Mammary epithelial cell (primary cell): ENCODE measurements at regions of chr10 and their contacts with region 1.

Region 1: GRCh38 chr10:25405871-25406270 is 231.1 kb downstream of the GPR158 start:
- DNase-seq: peak; percentile 17
- H3K4me3 ChIP-seq: no peak overlapping the region
- H3K27ac ChIP-seq: no peak overlapping the region
- H3K4me1 ChIP-seq: no peaks in the 10 kb centered on the region
- H3K27me3 ChIP-seq: no peaks in the 10 kb centered on the region
- CTCF ChIP-seq: no peak

Region 2: GRCh38 chr10:24724381-24725228 is 681.3 kb before region 1 on chr10:
- CTCF ChIA-PET with region 1: no interaction called
- dilution Hi-C with region 1: no loop called
- in situ Hi-C with region 1: no loop called
- intact Hi-C with region 1: no loop called
- DNase-seq: peak; percentile 96
- H3K4me3 ChIP-seq: peak overlapping the region; percentile 66 to 82 (median 70)
- H3K27ac ChIP-seq: peak overlapping the region; percentile 86
- H3K4me1 ChIP-seq: peaks cover 5% of the 10 kb centered on the region
- H3K27me3 ChIP-seq: no peaks in the 10 kb centered on the region
- CTCF ChIP-seq: no peak

Region 3: DNA sequence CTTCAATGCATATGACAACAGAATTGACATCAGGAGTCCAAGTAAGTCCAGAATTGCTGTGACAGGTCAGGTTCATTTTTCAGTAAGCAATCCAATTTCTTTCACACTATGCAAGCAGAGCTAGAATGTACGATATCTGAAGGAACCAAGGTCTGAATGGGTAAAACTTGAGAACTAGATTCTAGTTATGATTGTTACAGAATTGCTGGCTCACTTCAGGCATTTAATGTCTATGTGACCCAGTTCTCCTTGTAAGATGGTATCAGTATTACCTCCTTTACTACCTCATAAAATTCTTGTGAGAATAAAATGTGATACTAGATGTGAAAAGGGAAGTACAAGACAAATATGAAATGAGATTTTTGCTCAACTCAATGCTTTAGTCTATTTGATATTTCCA is 71.4 kb before region 1 on chr10:
- CTCF ChIA-PET with region 1: no interaction called
- dilution Hi-C with region 1: loop called (anchors 5 kb)
- in situ Hi-C with region 1: no loop called
- intact Hi-C with region 1: no loop called
- DNase-seq: no peak
- H3K4me3 ChIP-seq: no peak overlapping the region
- H3K27ac ChIP-seq: no peak overlapping the region
- H3K4me1 ChIP-seq: no peaks in the 10 kb centered on the region
- H3K27me3 ChIP-seq: no peaks in the 10 kb centered on the region
- CTCF ChIP-seq: no peak